ENCODE measurements at regions of chr3 and their contacts with region 1.

Region 1: GRCh38 chr3:141452036-141452435 is 34.8 kb upstream of the RASA2 start:
- DNase-seq: peak; percentile 38 to 82
- ATAC-seq: peak; percentile 74 to 79
- H3K4me3 ChIP-seq: no peak overlapping the region
- H3K27ac ChIP-seq: peak overlapping the region; percentile 67 to 79
- H3K4me1 ChIP-seq: peaks cover 44% of the 10 kb centered on the region
- CTCF ChIP-seq: peak; percentile 84
- EP300 ChIP-seq: no peak
- POLR2A ChIP-seq: no peak
- RAD21 ChIP-seq: peak; percentile 96 to 98

Region 2: GRCh38 chr3:141412087-141412935 is 39.7 kb before region 1 on chr3:
- CTCF ChIA-PET with region 1: interaction called, 11 read pairs
- POLR2A ChIA-PET with region 1: no interaction called
- DNase-seq: peak; percentile 58 to 91
- ATAC-seq: peak; percentile 49 to 51
- H3K4me3 ChIP-seq: peak overlapping the region; percentile 22; the same call in 1 of the 3 replicates
- H3K27ac ChIP-seq: peak overlapping the region; percentile 99 to 100
- H3K4me1 ChIP-seq: peaks cover 99% of the 10 kb centered on the region
- CTCF ChIP-seq: no peak
- EP300 ChIP-seq: peak in 1 of 2 experiments; percentile 21; a peak in 1 of 5 replicates
- POLR2A ChIP-seq: no peak
- RAD21 ChIP-seq: no peak

Region 3: GRCh38 chr3:141431411-141432378 is 20.3 kb before region 1 on chr3:
- CTCF ChIA-PET with region 1: interaction called, 13 read pairs
- POLR2A ChIA-PET with region 1: no interaction called
- DNase-seq: no peak
- ATAC-seq: no peak
- H3K4me3 ChIP-seq: no peak overlapping the region
- H3K27ac ChIP-seq: peak overlapping the region; percentile 4 to 68; a peak in 4 of 6 replicates
- H3K4me1 ChIP-seq: peaks cover 70% of the 10 kb centered on the region
- CTCF ChIP-seq: no peak
- EP300 ChIP-seq: no peak
- POLR2A ChIP-seq: no peak
- RAD21 ChIP-seq: no peak

Region 4: GRCh38 chr3:141441381-141442364 is 10.4 kb before region 1 on chr3:
- CTCF ChIA-PET with region 1: interaction called, 33 read pairs
- POLR2A ChIA-PET with region 1: no interaction called
- DNase-seq: peak; percentile 66 to 73
- ATAC-seq: peak; percentile 88 to 94
- H3K4me3 ChIP-seq: no peak overlapping the region
- H3K27ac ChIP-seq: peak overlapping the region; percentile 4 to 68; a peak in 4 of 6 replicates
- H3K4me1 ChIP-seq: peaks cover 23% of the 10 kb centered on the region
- CTCF ChIP-seq: peak; percentile 61
- EP300 ChIP-seq: no peak
- POLR2A ChIP-seq: no peak
- RAD21 ChIP-seq: peak; percentile 62 to 71